ENCODE measurements at regions of chr1 and their contacts with region 1.

Region 1: DNA sequence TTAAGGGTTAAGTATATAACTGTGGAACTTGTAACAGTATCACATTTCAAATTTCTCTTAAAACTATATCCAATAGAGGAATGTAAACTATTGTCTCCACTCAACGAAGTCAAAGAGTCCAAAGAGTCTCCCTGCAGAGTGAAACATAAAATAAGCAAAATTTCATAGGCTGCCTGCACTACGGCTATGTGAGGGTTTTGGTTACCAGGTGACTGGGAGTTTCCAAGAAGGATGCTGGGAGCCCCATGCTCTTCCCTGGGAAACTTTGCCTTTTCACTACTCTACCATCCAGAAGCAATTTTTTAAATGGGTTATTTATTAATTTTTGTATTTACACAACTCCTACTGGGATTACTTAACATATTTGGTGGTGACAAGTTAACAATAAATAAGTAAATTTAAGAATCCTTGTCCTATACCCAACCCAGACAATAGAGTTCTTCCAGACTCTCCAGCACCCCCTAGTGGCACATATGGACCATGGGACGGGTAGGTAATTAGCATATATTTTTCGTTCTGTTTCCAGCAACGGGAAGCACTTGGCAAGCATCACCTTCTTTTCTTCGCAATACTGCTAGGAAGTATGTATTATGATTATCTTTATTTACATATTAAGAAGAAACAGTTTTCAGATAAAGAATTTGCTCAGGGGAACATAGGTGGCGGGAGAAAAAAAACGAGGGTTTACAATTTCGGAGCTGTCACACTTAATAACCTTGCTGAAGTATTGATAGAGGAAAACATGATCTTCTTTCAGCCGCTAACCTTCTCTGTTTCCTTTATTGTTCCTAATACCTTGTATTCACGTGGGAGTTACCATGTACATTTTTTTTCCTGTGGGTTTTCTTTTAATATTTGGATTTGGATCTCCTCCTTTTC is 3.5 kb downstream of the FMO2 start:
- DNase-seq: peak in 1 of 2 donors; percentile 15
- ATAC-seq: no peak
- H3K4me3 ChIP-seq: peak overlapping the region; percentile 37 to 56 (median 48)
- H3K27ac ChIP-seq: peak overlapping the region; percentile 16 to 75 (median 63)
- H3K4me1 ChIP-seq: no peaks in the 10 kb centered on the region
- H3K27me3 ChIP-seq: no peaks in the 10 kb centered on the region
- CTCF ChIP-seq: peak; percentile 34 to 69 (median 60)
- POLR2A ChIP-seq: no peak

Region 2: GRCh38 chr1:171081314-171081753 is 107.3 kb before region 1 on chr1:
- in situ Hi-C with region 1: loop called in 1 of 4 experiments (anchors 25 kb)
- intact Hi-C with region 1: no loop called
- DNase-seq: no peak
- ATAC-seq: peak in 1 of 2 donors; percentile 24
- H3K4me3 ChIP-seq: no peak overlapping the region
- H3K27ac ChIP-seq: peak overlapping the region; percentile 13 to 52 (median 49)
- H3K4me1 ChIP-seq: peaks cover 0 to 4% of the 10 kb centered on the region in 2 donors
- H3K27me3 ChIP-seq: no peaks in the 10 kb centered on the region
- CTCF ChIP-seq: peak in 3 of 5 experiments; percentile 22 to 43 (median 29)
- POLR2A ChIP-seq: no peak

Region 3: DNA sequence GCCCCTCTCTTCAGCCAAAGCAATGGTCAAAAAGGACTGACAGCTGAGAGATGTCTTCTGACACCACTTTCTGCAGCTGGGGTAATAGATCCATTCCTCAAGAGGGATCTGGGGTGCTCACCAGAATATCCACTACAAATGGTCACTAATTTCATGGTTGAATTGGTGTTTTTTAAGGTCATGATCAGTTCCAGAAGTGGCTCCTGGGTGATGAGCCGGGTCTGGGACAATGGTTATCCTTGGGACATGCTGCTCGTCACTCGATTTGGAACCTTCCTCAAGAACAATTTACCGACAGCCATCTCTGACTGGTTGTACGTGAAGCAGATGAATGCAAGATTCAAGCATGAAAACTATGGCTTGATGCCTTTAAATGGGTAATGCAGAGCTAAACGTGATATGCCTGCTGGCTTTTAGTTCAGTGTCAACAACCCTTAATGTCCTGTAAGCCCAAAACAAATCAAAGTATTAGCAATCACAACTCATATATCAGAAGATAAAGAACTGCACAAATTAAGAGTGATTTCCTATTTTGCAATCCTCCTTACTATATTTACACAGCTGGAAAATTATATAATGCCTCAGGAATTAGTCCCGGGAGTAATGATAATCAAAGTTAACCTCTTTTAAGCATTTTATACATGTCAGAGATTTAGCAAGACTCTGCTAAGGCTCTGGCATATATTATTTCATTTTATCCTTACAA is 77.9 kb before region 1 on chr1:
- in situ Hi-C with region 1: no loop called
- intact Hi-C with region 1: loop called (anchors 1 kb)
- DNase-seq: no peak
- ATAC-seq: peak in 1 of 2 donors; percentile 30
- H3K4me3 ChIP-seq: no peak overlapping the region
- H3K27ac ChIP-seq: peak overlapping the region; percentile 10 to 45 (median 31)
- H3K4me1 ChIP-seq: peaks cover 3 to 17% of the 10 kb centered on the region in 2 donors
- H3K27me3 ChIP-seq: no peaks in the 10 kb centered on the region
- CTCF ChIP-seq: no peak
- POLR2A ChIP-seq: no peak

Region 4: GRCh38 chr1:171141688-171142415 is 46.8 kb before region 1 on chr1:
- in situ Hi-C with region 1: no loop called
- intact Hi-C with region 1: loop called (anchors 2 kb)
- DNase-seq: peak; percentile 47 to 72
- ATAC-seq: peak; percentile 80 to 82
- H3K4me3 ChIP-seq: peak overlapping the region in 1 of 4 donors; percentile 14
- H3K27ac ChIP-seq: peak overlapping the region; percentile 65 to 85 (median 78)
- H3K4me1 ChIP-seq: peaks cover 41 to 47% of the 10 kb centered on the region in 2 donors
- H3K27me3 ChIP-seq: no peaks in the 10 kb centered on the region
- CTCF ChIP-seq: no peak
- POLR2A ChIP-seq: no peak

Region 5: GRCh38 chr1:171226747-171227370 is 38.2 kb after region 1 on chr1:
- in situ Hi-C with region 1: no loop called
- intact Hi-C with region 1: loop called (anchors 5 kb)
- DNase-seq: no peak
- ATAC-seq: no peak
- H3K4me3 ChIP-seq: no peak overlapping the region
- H3K27ac ChIP-seq: no peak overlapping the region
- H3K4me1 ChIP-seq: peaks cover 0 to 4% of the 10 kb centered on the region in 2 donors
- H3K27me3 ChIP-seq: no peaks in the 10 kb centered on the region
- CTCF ChIP-seq: peak; percentile 30 to 65 (median 63)
- POLR2A ChIP-seq: no peak

Measured in gastrocnemius medialis (tissue), 4 donors.